ENCODE measurements at regions of chr20 and their contacts with region 1.

Region 1: DNA sequence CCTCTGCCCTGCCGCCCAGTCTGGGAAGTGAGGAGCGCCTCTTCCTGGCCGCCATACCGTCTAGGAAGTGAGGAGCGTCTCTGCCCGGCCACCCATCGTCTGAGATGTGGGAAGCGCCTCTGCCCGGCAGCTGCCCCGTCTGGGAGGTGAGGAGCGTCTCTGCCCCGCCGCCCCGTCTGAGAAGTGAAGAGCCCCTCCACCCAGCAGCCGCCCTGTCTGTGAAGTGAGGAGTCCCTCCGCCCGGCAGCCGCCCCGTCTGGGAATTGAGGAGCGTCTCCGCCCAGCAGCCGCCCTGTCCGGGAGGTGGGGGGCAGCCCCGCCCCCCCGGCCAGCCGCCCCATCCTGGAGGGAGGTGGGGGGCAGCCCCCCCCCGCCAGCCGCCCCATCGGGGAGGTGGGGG is 27.8 kb downstream of the SNHG17 start:
- DNase-seq: no peak
- H3K4me3 ChIP-seq: no peak overlapping the region
- H3K27ac ChIP-seq: no peak overlapping the region
- H3K4me1 ChIP-seq: no peaks in the 10 kb centered on the region
- H3K27me3 ChIP-seq: no peaks in the 10 kb centered on the region
- CTCF ChIP-seq: no peak
- EP300 ChIP-seq: no peak
- RAD21 ChIP-seq: no peak

Region 2: GRCh38 chr20:37703029-37703845 is 704.1 kb before region 1 on chr20:
- CTCF ChIA-PET with region 1: no interaction called
- POLR2A ChIA-PET with region 1: no interaction called
- DNase-seq: no peak
- H3K4me3 ChIP-seq: no peak overlapping the region
- H3K27ac ChIP-seq: no peak overlapping the region
- H3K4me1 ChIP-seq: peaks cover 0 to 8% of the 10 kb centered on the region in 2 experiments; a peak in 2 of 4 replicates
- H3K27me3 ChIP-seq: no peaks in the 10 kb centered on the region
- CTCF ChIP-seq: no peak
- EP300 ChIP-seq: no peak
- RAD21 ChIP-seq: no peak

Region 3: GRCh38 chr20:38229376-38230252 is 177.7 kb before region 1 on chr20:
- CTCF ChIA-PET with region 1: interaction called, 37 read pairs
- POLR2A ChIA-PET with region 1: no interaction called
- DNase-seq: peak; percentile 70
- H3K4me3 ChIP-seq: no peak overlapping the region; a peak in 1 of 4 replicates
- H3K27ac ChIP-seq: no peak overlapping the region
- H3K4me1 ChIP-seq: peaks cover 0 to 7% of the 10 kb centered on the region in 2 experiments; a peak in 1 of 4 replicates
- H3K27me3 ChIP-seq: no peaks in the 10 kb centered on the region
- CTCF ChIP-seq: peak; percentile 65
- EP300 ChIP-seq: no peak
- RAD21 ChIP-seq: peak; percentile 62

Region 4: DNA sequence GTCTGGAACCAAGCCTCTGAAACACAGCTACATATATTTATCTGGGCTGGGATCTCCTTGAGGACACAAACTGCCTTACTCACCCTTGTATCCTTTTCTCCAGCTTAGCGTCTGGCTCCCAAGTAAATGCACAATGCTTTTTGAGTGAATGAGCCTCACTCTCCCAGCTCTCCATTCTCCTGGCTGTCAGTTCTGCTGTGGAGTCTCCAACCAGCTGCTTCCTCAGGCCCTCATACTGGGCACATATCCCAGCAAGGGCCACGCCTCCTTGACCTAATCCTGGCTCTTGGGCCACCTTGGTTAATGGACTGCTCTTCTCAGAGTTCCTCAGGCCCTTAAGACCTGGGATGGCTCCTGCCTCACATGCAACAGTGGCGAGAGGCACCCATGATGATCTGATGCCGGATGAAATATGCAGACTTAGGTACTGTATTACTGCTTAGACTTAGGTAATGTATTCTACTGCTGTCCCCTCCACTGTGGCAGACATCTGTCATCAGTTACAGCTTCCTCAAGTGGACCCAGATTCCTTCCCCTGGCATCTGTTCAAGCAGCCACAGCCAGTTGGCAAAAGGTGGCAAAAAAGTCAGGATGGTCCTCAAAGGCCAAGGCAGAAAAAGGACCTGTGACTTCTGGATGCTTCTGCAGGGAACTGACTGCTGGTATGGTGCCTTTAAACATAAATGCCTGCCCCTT is 11.3 kb after region 1 on chr20:
- CTCF ChIA-PET with region 1: interaction called, 25 read pairs
- POLR2A ChIA-PET with region 1: no interaction called
- DNase-seq: no peak
- H3K4me3 ChIP-seq: no peak overlapping the region
- H3K27ac ChIP-seq: peak overlapping the region in 1 of 2 experiments; percentile 12; a peak in 2 of 4 replicates
- H3K4me1 ChIP-seq: peaks cover 0 to 6% of the 10 kb centered on the region in 2 experiments; a peak in 1 of 4 replicates
- H3K27me3 ChIP-seq: no peaks in the 10 kb centered on the region
- CTCF ChIP-seq: no peak
- EP300 ChIP-seq: no peak
- RAD21 ChIP-seq: no peak

Measured in SK-N-SH (cell line).